GM10248 (cell line): ENCODE measurements at regions of chr5 and their contacts with region 1.

Region 1: GRCh38 chr5:154461531-154461930 is 15.7 kb downstream of the SAP30L start:
- DNase-seq: no peak
- CTCF ChIP-seq: peak; percentile 20

Region 2: GRCh38 chr5:154430466-154430865 is 31.1 kb before region 1 on chr5:
- CTCF ChIA-PET with region 1: no interaction called
- POLR2A ChIA-PET with region 1: no interaction called
- DNase-seq: no peak
- CTCF ChIP-seq: no peak

Region 3: GRCh38 chr5:154446183-154447088 is 15.1 kb before region 1 on chr5:
- CTCF ChIA-PET with region 1: interaction called, 38 read pairs
- POLR2A ChIA-PET with region 1: no interaction called
- DNase-seq: peak; percentile 59
- CTCF ChIP-seq: no peak